GM12878 (cell line): ENCODE measurements at regions of chr13 and their contacts with region 1.

Region 1: DNA sequence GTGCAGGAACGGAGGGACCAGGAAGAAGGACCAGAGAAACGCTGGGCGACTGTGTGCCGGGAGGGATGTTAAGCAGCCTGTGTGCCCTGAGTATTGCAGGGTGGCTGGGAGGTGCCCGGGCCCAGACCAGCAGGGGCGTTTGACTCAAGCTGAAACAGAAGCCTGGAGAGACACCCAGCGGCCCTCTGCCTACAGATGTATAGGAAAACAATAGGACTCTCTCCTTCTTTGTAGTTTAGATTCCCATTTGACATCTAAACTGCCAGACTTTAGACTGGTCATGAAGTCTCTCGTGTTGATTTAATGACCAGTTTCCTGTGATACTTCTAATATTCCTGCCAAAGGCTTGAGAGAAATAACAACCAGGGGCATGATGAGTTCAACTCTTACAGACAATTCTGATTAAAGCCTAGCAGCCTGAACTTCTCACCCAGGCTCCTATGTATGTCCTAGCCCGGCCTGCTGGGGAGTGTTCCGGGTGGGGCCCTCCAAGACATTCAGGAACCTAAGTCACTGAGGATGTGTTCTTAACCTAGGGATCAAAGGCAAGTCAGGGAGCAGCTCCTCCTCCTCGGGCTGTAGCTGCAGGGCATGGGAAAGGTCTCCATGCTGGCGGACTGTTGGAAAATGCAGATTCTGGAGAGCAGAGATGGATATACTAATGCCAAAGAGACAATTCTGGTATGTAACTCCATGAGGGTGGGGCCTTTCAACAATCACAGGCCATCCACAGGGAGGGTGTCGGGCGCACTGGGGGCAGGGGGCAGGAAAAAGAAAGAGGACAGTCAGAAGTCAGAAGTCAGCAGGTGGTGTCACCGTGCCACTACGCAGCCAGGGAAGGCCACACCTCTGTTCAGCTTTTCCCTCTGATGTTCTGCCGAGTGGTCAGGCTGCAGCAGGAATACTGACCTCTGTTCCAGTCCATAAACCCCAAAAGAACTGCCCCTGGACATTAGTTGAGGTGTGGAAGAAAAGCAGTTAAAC is 131.8 kb downstream of the STARD13 start:
- DNase-seq: no peak
- ATAC-seq: peak; percentile 53
- H3K4me3 ChIP-seq: no peak overlapping the region
- H3K27ac ChIP-seq: no peak overlapping the region
- H3K4me1 ChIP-seq: peaks cover 26% of the 10 kb centered on the region
- H3K27me3 ChIP-seq: no peaks in the 10 kb centered on the region
- CTCF ChIP-seq: peak in 2 of 3 experiments; percentile 25 to 49; a peak in 3 of 6 replicates
- EP300 ChIP-seq: no peak
- POLR2A ChIP-seq: no peak
- RAD21 ChIP-seq: peak; percentile 39; the same call in 1 of the 2 replicates

Region 2: DNA sequence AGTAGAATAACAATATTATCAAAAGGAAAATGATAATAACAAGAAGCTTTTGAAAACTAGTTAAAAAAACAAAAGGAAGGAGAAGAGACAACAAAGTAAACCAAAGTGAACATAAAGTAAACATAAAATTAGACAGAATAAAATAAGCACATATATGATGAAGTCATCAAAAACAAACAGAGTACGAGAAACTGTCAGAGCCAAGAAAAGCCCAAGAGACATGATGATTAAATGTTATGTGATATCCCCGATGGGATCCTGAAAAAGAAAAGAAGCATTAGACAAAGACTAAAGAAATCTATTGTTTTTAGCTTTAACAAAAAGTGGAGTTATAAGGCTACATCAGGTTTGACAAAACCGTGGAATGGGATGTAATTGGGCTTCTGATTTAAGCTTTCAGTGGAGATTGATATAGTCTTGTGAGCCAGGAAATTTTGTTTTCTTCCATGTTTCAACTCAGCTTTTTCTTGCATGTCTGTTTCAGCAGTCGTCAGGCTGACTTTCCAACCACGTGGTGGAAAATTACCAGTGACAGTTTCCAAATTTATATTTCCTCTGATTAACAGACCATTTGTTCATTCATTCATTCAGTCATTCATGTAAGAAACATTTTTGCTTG is 72.6 kb before region 1 on chr13:
- CTCF ChIA-PET with region 1: no interaction called
- POLR2A ChIA-PET with region 1: no interaction called
- RAD21 ChIA-PET with region 1: no interaction called
- SMC1A ChIA-PET with region 1: no interaction called
- in situ Hi-C with region 1: no loop called
- intact Hi-C with region 1: no loop called
- DNase-seq: no peak
- ATAC-seq: no peak
- H3K4me3 ChIP-seq: no peak overlapping the region
- H3K27ac ChIP-seq: no peak overlapping the region
- H3K4me1 ChIP-seq: peaks cover 5% of the 10 kb centered on the region
- H3K27me3 ChIP-seq: no peaks in the 10 kb centered on the region
- CTCF ChIP-seq: no peak
- EP300 ChIP-seq: no peak
- POLR2A ChIP-seq: no peak
- RAD21 ChIP-seq: no peak

Region 3: DNA sequence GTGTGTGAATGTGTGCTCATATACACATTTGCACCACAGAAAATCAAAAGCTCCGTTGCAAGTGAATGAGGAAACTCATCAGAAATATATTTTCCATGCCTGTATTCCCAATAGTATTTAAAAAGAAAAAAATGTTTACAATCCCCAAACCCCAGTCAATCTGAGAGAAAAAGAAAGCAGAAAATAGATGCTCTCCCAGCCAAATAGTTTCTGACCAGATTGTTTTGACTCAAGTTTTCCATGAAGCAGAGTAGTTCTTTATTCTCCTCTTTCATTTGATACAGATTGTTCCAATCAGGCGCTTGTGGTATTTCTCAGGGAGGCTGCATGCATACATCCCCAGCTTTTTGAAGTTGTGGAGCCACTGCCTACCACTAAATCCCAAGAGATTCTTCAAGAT is 21.2 kb after region 1 on chr13:
- CTCF ChIA-PET with region 1: interaction called, 3 read pairs
- POLR2A ChIA-PET with region 1: interaction called, 6 read pairs
- RAD21 ChIA-PET with region 1: interaction called, 76 read pairs
- SMC1A ChIA-PET with region 1: interaction called, 832 read pairs
- in situ Hi-C with region 1: no loop called
- intact Hi-C with region 1: no loop called
- DNase-seq: no peak
- ATAC-seq: no peak
- H3K4me3 ChIP-seq: no peak overlapping the region
- H3K27ac ChIP-seq: no peak overlapping the region
- H3K4me1 ChIP-seq: no peaks in the 10 kb centered on the region
- H3K27me3 ChIP-seq: no peaks in the 10 kb centered on the region
- CTCF ChIP-seq: no peak
- EP300 ChIP-seq: no peak
- POLR2A ChIP-seq: no peak
- RAD21 ChIP-seq: no peak

Region 4: DNA sequence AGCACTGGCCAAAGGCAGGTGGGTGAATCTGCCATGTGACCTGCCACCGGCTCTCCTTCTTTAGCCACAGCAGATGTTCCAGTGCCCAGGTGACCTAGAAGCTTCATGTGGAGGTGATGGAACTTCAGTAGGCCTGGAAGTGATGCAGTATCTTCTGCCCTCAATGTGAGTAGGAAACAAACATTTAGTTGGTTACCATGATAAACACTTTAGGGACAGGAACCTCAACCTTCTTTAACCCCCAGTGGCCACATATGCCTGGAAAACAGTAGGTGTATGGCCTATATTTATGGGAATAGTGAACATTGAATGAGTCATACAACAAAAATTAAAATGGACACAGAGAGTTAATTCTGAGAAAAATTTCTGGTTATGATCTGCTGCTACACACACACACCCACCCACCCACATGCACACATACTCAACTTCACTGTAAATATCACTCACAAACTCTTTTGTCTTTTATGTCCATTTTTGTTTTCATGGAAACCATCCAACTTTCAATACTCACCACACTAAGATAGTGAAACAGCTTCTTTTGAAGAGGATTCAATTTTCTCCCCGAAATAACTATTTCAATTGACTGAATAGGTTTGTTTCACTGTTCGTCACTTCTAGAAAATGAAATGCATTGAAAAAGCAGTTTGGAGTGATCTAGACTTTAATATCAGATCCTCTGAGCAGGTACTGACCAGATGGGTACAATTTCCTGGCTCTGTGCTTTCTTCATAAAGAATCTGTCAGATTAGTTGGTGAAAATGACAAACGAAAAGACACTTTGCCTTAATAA is 34.6 kb after region 1 on chr13:
- CTCF ChIA-PET with region 1: interaction called, 36 read pairs
- POLR2A ChIA-PET with region 1: interaction called, 343 read pairs
- RAD21 ChIA-PET with region 1: interaction called, 91 read pairs
- SMC1A ChIA-PET with region 1: interaction called, 832 read pairs
- in situ Hi-C with region 1: loop called (anchors 5 kb)
- intact Hi-C with region 1: loop called (anchors 2 kb)
- DNase-seq: peak; percentile 79
- ATAC-seq: peak; percentile 75
- H3K4me3 ChIP-seq: peak overlapping the region; percentile 24; the same call in 1 of the 2 replicates
- H3K27ac ChIP-seq: peak overlapping the region; percentile 93
- H3K4me1 ChIP-seq: peaks cover 31% of the 10 kb centered on the region
- H3K27me3 ChIP-seq: no peaks in the 10 kb centered on the region
- CTCF ChIP-seq: no peak
- EP300 ChIP-seq: peak; percentile 49 to 56
- POLR2A ChIP-seq: no peak
- RAD21 ChIP-seq: peak; percentile 13; the same call in 1 of the 2 replicates

Region 5: DNA sequence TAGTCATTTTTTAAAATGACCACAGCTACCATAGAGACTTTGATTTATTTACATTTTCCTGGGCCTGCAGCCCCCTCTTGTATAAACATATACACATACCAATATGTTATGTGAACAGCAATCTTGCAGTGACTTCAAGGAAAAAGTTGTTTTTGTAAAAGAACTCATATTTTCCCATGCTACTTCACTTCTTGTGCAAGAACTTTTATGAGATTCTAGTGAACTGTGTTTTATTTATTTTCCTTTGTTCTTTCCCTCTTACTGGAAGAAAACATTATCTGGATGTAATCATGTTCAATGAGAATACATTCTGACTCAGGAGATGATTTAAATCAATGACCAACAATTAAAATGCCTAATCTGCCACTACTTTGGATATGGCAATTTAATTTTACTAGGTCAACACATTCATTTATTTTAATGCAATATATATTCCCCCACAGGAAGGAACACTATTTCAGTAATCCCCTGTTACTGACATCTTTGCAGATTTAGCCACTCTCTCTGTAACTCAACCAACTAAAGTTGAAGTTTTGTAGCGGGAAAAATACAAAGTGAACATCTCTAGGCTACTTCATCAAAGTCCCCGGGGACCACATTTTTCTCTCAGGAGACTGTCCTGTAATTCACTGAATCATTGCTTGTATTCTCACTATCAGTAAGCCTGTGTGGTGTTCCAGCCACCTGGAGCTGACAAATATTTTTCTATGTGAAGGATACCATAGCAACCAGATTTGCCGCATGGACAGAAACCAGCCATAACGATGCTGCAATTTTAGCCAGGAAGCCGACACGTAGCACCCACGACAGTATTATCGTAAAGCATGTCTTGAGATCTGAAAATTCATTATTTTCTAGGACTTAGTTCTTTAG is 41.3 kb after region 1 on chr13:
- CTCF ChIA-PET with region 1: interaction called, 36 read pairs
- POLR2A ChIA-PET with region 1: interaction called, 343 read pairs
- RAD21 ChIA-PET with region 1: interaction called, 231 read pairs
- SMC1A ChIA-PET with region 1: interaction called, 832 read pairs
- in situ Hi-C with region 1: no loop called
- intact Hi-C with region 1: no loop called
- DNase-seq: peak; percentile 99
- ATAC-seq: peak; percentile 71
- H3K4me3 ChIP-seq: peak overlapping the region; percentile 54
- H3K27ac ChIP-seq: peak overlapping the region; percentile 92
- H3K4me1 ChIP-seq: peaks cover 29% of the 10 kb centered on the region
- H3K27me3 ChIP-seq: no peaks in the 10 kb centered on the region
- CTCF ChIP-seq: no peak
- EP300 ChIP-seq: peak; percentile 71 to 95
- POLR2A ChIP-seq: no peak
- RAD21 ChIP-seq: 0 out of 2 replicates have a peak, but pooled peaks have one; percentile 24